Gastrocnemius medialis (tissue), 4 donors: ENCODE measurements at regions of chr15 and their contacts with region 1.

Region 1: DNA sequence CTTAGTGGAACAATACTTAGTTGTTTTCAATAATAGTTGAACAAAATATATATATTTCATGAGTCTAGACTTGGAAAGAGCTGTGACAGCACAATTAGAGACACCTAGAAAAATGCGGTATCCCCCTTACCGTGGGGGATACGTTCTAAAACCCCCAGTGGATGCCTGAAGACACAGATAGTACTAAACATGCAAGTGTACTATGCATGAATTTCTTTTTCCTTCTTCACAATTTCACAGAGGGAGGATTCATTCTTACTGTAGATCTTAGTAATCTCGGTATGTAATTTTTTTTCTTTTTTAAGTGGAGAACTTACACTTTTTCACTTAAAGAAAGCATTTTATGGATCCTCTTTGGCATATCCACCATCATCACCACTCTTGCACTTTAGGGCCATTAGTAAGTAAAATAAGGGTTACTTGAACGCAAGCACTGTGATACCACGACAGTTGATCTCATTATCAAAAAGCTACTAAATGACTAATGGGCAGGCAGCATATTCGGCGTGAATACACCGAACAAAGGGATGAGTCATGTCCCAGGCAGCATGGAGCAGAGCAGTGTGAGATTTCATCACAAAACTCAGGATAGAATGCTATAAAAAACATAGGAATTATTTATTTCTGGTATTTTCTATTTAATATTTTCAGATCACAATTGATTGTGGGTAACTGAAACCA is 72.3 kb upstream of the ZNF280D start:
- DNase-seq: peak; percentile 20 to 30
- ATAC-seq: peak; percentile 91 to 97
- H3K4me3 ChIP-seq: peak overlapping the region; percentile 19 to 42 (median 34)
- H3K27ac ChIP-seq: peak overlapping the region in 2 of 4 donors; percentile 20 to 44
- H3K4me1 ChIP-seq: peaks cover 0 to 6% of the 10 kb centered on the region in 2 donors
- H3K27me3 ChIP-seq: no peaks in the 10 kb centered on the region
- CTCF ChIP-seq: no peak
- POLR2A ChIP-seq: no peak

Region 2: DNA sequence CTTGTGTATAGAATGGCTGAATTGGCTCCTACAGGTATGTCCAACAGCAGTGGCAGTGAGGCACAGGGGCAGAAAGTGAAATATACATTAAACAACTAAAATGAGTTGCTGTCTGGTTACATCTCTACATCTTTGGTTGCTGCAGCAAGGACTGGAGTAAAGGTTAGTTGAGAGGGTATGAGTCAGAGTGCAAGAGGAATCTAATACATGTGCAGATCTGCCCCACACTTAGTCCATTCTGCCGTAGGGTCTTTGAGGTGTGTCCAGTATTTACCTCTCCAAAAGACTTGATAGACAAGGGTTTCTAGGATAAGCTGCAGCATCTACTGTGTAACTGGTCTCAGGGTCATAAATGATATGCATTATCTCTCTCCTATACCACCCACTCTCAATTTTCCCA is 806.0 kb before region 1 on chr15:
- in situ Hi-C with region 1: no loop called
- intact Hi-C with region 1: loop called (anchors 5 kb)
- DNase-seq: no peak
- ATAC-seq: no peak
- H3K4me3 ChIP-seq: no peak overlapping the region
- H3K27ac ChIP-seq: no peak overlapping the region
- H3K4me1 ChIP-seq: peaks cover 0 to 2% of the 10 kb centered on the region in 2 donors
- H3K27me3 ChIP-seq: no peaks in the 10 kb centered on the region
- CTCF ChIP-seq: no peak
- POLR2A ChIP-seq: no peak

Region 3: GRCh38 chr15:56719774-56720555 is 85.6 kb before region 1 on chr15:
- in situ Hi-C with region 1: no loop called
- intact Hi-C with region 1: no loop called
- DNase-seq: no peak
- ATAC-seq: no peak
- H3K4me3 ChIP-seq: no peak overlapping the region
- H3K27ac ChIP-seq: no peak overlapping the region
- H3K4me1 ChIP-seq: peaks cover 38 to 40% of the 10 kb centered on the region in 2 donors
- H3K27me3 ChIP-seq: no peaks in the 10 kb centered on the region
- CTCF ChIP-seq: no peak
- POLR2A ChIP-seq: no peak